B cell (primary cell): ENCODE measurements at regions of chr11 and their contacts with region 1.

Region 1: GRCh38 chr11:72430741-72431570 is 3.4 kb downstream of the CLPB start:
- DNase-seq: peak; percentile 64
- ATAC-seq: no peak
- H3K4me3 ChIP-seq: no peak overlapping the region
- H3K4me3 Mint-ChIP-seq: no peak overlapping the region
- H3K27ac ChIP-seq: no peak overlapping the region
- H3K27ac Mint-ChIP-seq: peak overlapping the region; percentile 27
- H3K4me1 ChIP-seq: peaks cover 6 to 12% of the 10 kb centered on the region in 2 donors
- H3K4me1 Mint-ChIP-seq: peaks cover 30% of the 10 kb centered on the region
- H3K27me3 ChIP-seq: no peaks in the 10 kb centered on the region
- H3K27me3 Mint-ChIP-seq: no peaks in the 10 kb centered on the region
- CTCF ChIP-seq: peak; percentile 77

Region 2: DNA sequence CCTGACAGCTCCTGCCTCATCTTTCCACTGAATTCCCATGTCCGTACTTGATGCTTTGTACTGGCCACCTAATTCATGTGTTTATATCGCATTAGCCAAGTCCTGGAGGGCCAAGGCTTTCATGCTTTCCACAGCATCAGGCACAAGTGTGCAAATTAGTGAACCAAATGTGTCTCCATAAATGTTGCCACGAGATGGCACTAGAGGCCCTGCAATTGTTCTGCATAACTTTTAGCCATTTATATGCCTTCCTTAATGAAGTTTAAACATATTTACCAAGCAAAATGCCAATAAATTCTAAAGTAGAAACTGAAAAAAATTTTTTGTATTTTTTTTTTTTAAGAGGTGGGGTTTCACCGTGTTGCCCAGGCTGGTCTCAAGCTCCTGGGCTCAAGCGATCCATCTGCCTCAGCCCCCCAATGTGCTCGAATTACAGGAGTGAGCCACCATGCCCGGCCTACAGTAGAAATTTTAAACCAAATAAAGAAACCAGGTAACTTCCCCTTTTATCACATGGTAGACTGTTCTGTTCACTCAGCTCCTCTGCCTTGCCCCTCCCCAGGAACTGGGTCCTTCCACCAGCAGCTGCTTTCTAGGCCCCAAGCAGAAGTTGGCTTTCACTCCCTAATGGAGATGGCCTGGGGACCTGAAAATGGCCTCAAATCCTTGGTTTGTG is 453.1 kb before region 1 on chr11:
- CTCF ChIA-PET with region 1: interaction called, 10 read pairs
- POLR2A ChIA-PET with region 1: no interaction called
- intact Hi-C with region 1: loop called (anchors 1 kb)
- DNase-seq: peak; percentile 86
- ATAC-seq: peak; percentile 96
- H3K4me3 ChIP-seq: no peak overlapping the region
- H3K4me3 Mint-ChIP-seq: peak overlapping the region; percentile 38
- H3K27ac ChIP-seq: peak overlapping the region; percentile 64 to 72
- H3K27ac Mint-ChIP-seq: peak overlapping the region; percentile 93
- H3K4me1 ChIP-seq: peaks cover 17 to 25% of the 10 kb centered on the region in 2 donors
- H3K4me1 Mint-ChIP-seq: peaks cover 25% of the 10 kb centered on the region
- H3K27me3 ChIP-seq: no peaks in the 10 kb centered on the region
- H3K27me3 Mint-ChIP-seq: no peaks in the 10 kb centered on the region
- CTCF ChIP-seq: peak; percentile 82

Region 3: GRCh38 chr11:72112321-72113219 is 318.4 kb before region 1 on chr11 and contains the start of gene ANAPC15:
- CTCF ChIA-PET with region 1: no interaction called
- POLR2A ChIA-PET with region 1: no interaction called
- intact Hi-C with region 1: loop called (anchors 1 kb)
- DNase-seq: peak; percentile 99
- ATAC-seq: peak; percentile 89
- H3K4me3 ChIP-seq: peak within 1 kb of the TSS; percentile 67 to 94 (median 78)
- H3K4me3 Mint-ChIP-seq: peak within 1 kb of the TSS; percentile 93
- H3K27ac ChIP-seq: peak within 1 kb of the TSS; percentile 95
- H3K27ac Mint-ChIP-seq: peak within 1 kb of the TSS; percentile 98
- H3K4me1 ChIP-seq: peaks cover 14 to 19% of the 10 kb centered on the region in 2 donors
- H3K4me1 Mint-ChIP-seq: peaks cover 20% of the 10 kb centered on the region
- H3K27me3 ChIP-seq: peaks cover 0 to 12% (median 0%) of the 10 kb centered on the region in 4 experiments
- H3K27me3 Mint-ChIP-seq: peaks cover 14% of the 10 kb centered on the region
- CTCF ChIP-seq: no peak
- total RNA-seq, gene ANAPC15: 27.1 and 29.2 TPM in 2 replicates

Region 4: DNA sequence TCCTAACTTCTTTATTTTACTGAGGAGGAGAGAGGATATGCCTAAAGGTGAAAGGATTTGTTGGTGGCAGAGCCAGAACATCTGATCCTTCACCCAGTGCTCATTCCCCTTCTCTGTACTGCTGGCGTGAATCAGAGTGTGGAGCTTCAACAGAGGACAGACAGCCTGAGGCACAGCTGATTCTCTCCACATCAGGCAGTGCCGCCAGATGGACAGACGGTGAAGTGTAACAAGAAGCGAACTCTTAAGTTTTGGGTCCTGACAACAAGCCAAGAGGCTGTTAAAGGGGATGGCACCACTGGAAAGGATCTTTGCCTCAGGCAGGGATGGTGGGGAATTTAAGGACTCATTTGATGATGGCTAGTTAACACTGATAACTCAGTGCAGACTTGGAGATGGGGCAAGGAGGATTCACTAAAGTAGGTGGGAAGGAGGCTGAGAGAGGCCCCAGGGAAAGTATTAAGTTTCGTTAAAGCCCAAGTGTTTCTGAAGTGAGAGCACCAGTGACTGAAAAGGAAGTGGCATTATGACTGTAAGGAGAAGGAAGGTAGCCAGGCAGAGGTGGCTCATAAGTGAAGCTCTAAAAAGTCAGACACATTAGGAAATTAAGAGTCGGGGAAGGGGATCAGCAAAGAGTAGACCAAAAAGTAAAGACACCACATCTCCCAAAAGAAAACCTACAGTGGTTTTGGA is 78.0 kb before region 1 on chr11:
- CTCF ChIA-PET with region 1: interaction called, 13 read pairs
- POLR2A ChIA-PET with region 1: no interaction called
- intact Hi-C with region 1: loop called (anchors 1 kb)
- DNase-seq: no peak
- ATAC-seq: no peak
- H3K4me3 ChIP-seq: no peak overlapping the region
- H3K4me3 Mint-ChIP-seq: no peak overlapping the region
- H3K27ac ChIP-seq: no peak overlapping the region
- H3K27ac Mint-ChIP-seq: no peak overlapping the region
- H3K4me1 ChIP-seq: no peaks in the 10 kb centered on the region
- H3K4me1 Mint-ChIP-seq: no peaks in the 10 kb centered on the region
- H3K27me3 ChIP-seq: no peaks in the 10 kb centered on the region
- H3K27me3 Mint-ChIP-seq: no peaks in the 10 kb centered on the region
- CTCF ChIP-seq: no peak

Region 5: GRCh38 chr11:73376160-73376802 is 945.3 kb after region 1 on chr11 and contains the start of gene RELT:
- CTCF ChIA-PET with region 1: no interaction called
- POLR2A ChIA-PET with region 1: interaction called, 12 read pairs
- intact Hi-C with region 1: no loop called
- DNase-seq: peak; percentile 97
- ATAC-seq: peak; percentile 87
- H3K4me3 ChIP-seq: peak within 1 kb of the TSS; percentile 62 to 95 (median 92)
- H3K4me3 Mint-ChIP-seq: peak within 1 kb of the TSS; percentile 100
- H3K27ac ChIP-seq: peak within 1 kb of the TSS; percentile 98
- H3K27ac Mint-ChIP-seq: peak within 1 kb of the TSS; percentile 99
- H3K4me1 ChIP-seq: peaks cover 65 to 83% of the 10 kb centered on the region in 2 donors
- H3K4me1 Mint-ChIP-seq: peaks cover 75% of the 10 kb centered on the region
- H3K27me3 ChIP-seq: no peaks in the 10 kb centered on the region
- H3K27me3 Mint-ChIP-seq: no peaks in the 10 kb centered on the region
- CTCF ChIP-seq: peak; percentile 94
- total RNA-seq, gene RELT: 92.4 and 97.1 TPM in 2 replicates